Endothelial cell of umbilical vein (primary cell): ENCODE measurements at regions of chr17 and their contacts with region 1.

Region 1: DNA sequence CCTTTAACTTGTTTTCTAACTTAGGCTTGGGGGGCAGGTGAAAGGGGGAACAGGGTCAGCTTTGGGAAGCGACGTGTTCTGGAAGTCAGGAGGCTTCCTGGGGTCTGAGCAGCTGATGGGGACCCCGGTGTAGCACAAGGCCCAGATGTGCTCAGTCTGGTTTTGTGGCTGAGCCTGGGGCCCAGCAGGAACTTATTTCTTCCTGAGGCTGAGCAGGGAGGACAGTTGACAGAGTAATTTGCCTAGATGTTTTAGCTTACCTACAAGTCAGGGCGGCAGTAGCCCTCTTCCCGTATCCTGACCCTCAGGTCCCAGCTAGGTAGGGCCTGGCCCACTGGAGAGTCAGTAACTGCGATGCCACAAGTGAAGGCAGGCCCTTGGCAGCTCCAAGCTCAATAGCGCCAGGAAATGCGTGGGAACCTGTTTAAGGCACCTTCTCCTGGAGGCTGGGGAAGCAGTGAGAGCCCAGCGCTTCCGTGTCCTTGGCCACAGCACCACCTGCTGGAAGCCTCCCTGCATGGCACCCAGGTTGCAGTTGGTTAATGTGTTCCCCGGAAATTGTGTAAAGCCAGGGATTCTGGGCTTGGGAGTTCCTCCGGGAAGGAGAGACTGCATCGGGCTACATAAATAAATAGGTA is 5.2 kb downstream of the CCR7 start:
- DNase-seq: peak; percentile 88
- H3K4me3 ChIP-seq: no peak overlapping the region
- H3K27ac ChIP-seq: no peak overlapping the region
- H3K4me1 ChIP-seq: peaks cover 18% of the 10 kb centered on the region
- H3K27me3 ChIP-seq: peaks cover 15 to 27% of the 10 kb centered on the region in 2 experiments
- CTCF ChIP-seq: peak; percentile 97
- POLR2A ChIP-seq: no peak

Region 2: DNA sequence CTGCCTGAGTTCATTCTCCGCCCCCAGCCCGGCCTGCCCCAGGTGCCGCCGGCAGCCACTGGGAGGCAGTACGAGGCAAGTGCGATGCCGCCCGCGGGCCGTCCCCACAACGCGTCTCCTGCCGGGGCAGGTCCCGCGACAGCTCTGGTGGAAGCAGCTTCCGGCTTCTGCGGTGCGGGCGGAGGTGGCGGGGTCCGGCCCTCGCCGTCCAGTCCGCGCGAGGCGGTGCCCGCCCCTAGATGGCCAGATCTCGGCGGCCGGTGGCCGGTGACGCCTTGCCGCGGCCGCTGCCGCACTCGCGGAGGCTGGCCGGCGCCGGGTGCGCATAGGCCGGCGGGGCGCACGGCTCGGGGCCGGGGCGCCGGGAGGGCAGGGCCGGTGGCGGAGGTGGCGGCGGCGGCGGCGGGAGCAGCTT is 197.4 kb before region 1 on chr17:
- CTCF ChIA-PET with region 1: interaction called, 32 read pairs
- POLR2A ChIA-PET with region 1: no interaction called
- dilution Hi-C with region 1: no loop called
- intact Hi-C with region 1: loop called (anchors 1 kb)
- DNase-seq: peak; percentile 71
- H3K4me3 ChIP-seq: peak overlapping the region in 1 of 3 experiments; percentile 41
- H3K27ac ChIP-seq: no peak overlapping the region
- H3K4me1 ChIP-seq: peaks cover 7% of the 10 kb centered on the region
- H3K27me3 ChIP-seq: no peaks in the 10 kb centered on the region
- CTCF ChIP-seq: peak; percentile 85 to 88
- POLR2A ChIP-seq: no peak

Region 3: GRCh38 chr17:40417609-40418427 is 142.3 kb before region 1 on chr17 and contains the start of gene TOP2A:
- CTCF ChIA-PET with region 1: interaction called, 37 read pairs
- POLR2A ChIA-PET with region 1: no interaction called
- dilution Hi-C with region 1: no loop called
- intact Hi-C with region 1: no loop called
- DNase-seq: peak; percentile 100
- H3K4me3 ChIP-seq: peak within 1 kb of the TSS; percentile 72 to 91 (median 73)
- H3K27ac ChIP-seq: peak within 1 kb of the TSS; percentile 6
- H3K4me1 ChIP-seq: peaks cover 25% of the 10 kb centered on the region
- H3K27me3 ChIP-seq: no peaks in the 10 kb centered on the region
- CTCF ChIP-seq: no peak
- POLR2A ChIP-seq: peak; percentile 67
- total RNA-seq, gene TOP2A: 149 and 160 TPM in 2 replicates

Region 4: GRCh38 chr17:40450175-40450574 is 109.9 kb before region 1 on chr17:
- CTCF ChIA-PET with region 1: interaction called, 19 read pairs
- POLR2A ChIA-PET with region 1: no interaction called
- dilution Hi-C with region 1: no loop called
- intact Hi-C with region 1: no loop called
- DNase-seq: peak; percentile 65
- H3K4me3 ChIP-seq: no peak overlapping the region
- H3K27ac ChIP-seq: no peak overlapping the region
- H3K4me1 ChIP-seq: peaks cover 53% of the 10 kb centered on the region
- H3K27me3 ChIP-seq: no peaks in the 10 kb centered on the region
- CTCF ChIP-seq: peak; percentile 64 to 75
- POLR2A ChIP-seq: no peak

Region 5: GRCh38 chr17:40548982-40549685 is 10.9 kb before region 1 on chr17:
- CTCF ChIA-PET with region 1: interaction called, 35 read pairs
- POLR2A ChIA-PET with region 1: no interaction called
- dilution Hi-C with region 1: no loop called
- intact Hi-C with region 1: no loop called
- DNase-seq: peak; percentile 87
- H3K4me3 ChIP-seq: no peak overlapping the region
- H3K27ac ChIP-seq: no peak overlapping the region
- H3K4me1 ChIP-seq: peaks cover 16% of the 10 kb centered on the region
- H3K27me3 ChIP-seq: no peaks in the 10 kb centered on the region
- CTCF ChIP-seq: no peak
- POLR2A ChIP-seq: no peak

Region 6: GRCh38 chr17:40615295-40615988 is 55.4 kb after region 1 on chr17:
- CTCF ChIA-PET with region 1: interaction called, 10 read pairs
- POLR2A ChIA-PET with region 1: no interaction called
- dilution Hi-C with region 1: no loop called
- intact Hi-C with region 1: no loop called
- DNase-seq: peak; percentile 26
- H3K4me3 ChIP-seq: no peak overlapping the region
- H3K27ac ChIP-seq: no peak overlapping the region
- H3K4me1 ChIP-seq: no peaks in the 10 kb centered on the region
- H3K27me3 ChIP-seq: peaks cover 13 to 14% of the 10 kb centered on the region in 2 experiments
- CTCF ChIP-seq: peak; percentile 23 to 39
- POLR2A ChIP-seq: no peak

Region 7: DNA sequence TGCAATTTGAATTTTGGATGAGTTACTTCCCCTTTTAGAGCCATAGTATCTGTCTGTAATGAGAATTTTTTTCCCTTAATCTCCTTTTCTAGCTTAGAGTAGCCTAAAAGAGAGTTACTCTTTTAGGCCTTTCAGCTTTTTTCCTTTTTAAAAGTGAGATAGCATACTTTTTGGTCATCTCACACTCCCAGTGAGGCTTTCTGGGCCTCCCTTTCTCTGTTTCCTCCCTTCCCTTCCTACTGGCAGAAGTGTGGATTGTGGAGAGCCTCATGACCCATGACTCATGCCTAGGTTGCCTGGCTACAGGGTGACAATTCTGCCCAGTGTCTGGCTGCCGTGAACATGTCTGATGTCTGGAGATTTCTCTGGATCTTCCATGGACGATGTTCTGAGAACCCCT is 362.2 kb after region 1 on chr17:
- CTCF ChIA-PET with region 1: no interaction called
- POLR2A ChIA-PET with region 1: no interaction called
- dilution Hi-C with region 1: no loop called
- intact Hi-C with region 1: no loop called
- DNase-seq: peak; percentile 75
- H3K4me3 ChIP-seq: no peak overlapping the region
- H3K27ac ChIP-seq: peak overlapping the region; percentile 18
- H3K4me1 ChIP-seq: peaks cover 4% of the 10 kb centered on the region
- H3K27me3 ChIP-seq: peaks cover 3 to 10% of the 10 kb centered on the region in 2 experiments
- CTCF ChIP-seq: no peak
- POLR2A ChIP-seq: no peak